Activated CD4-positive, alpha-beta memory T cell treated with anti-CD3 and anti-CD28 coated beads for 36 hours (primary cell): ENCODE measurements at regions of chr4 and their contacts with region 1.

Region 1: DNA sequence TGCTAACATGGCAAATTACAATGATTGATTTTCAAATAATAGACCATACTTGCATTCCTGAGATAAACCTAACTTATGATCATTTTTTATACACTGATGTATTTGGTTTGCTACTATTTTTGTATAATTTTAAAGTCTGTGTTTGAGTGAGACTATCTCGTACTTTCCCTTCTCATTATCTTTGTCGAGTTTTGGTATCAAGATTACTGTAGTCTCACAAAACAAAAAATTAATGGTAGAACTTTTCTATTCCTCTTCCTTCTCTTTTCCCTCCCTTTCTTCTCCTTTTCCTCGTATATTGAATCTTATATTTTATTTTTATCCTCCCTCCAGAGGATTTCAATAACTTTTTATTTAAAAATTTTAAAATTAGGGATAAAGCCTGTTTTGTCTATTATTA is 41.5 kb downstream of the RGS12 start:
- DNase-seq: no peak
- H3K4me3 Mint-ChIP-seq: no peak overlapping the region
- H3K27ac Mint-ChIP-seq: no peak overlapping the region
- H3K4me1 Mint-ChIP-seq: peaks cover 4% of the 10 kb centered on the region
- H3K27me3 Mint-ChIP-seq: no peaks in the 10 kb centered on the region

Region 2: GRCh38 chr4:3346146-3346545 is 11.8 kb after region 1 on chr4:
- CTCF ChIA-PET with region 1: interaction called, 11 read pairs
- POLR2A ChIA-PET with region 1: no interaction called
- intact Hi-C with region 1: no loop called
- DNase-seq: peak; percentile 28
- H3K4me3 Mint-ChIP-seq: no peak overlapping the region
- H3K27ac Mint-ChIP-seq: no peak overlapping the region
- H3K4me1 Mint-ChIP-seq: peaks cover 18% of the 10 kb centered on the region
- H3K27me3 Mint-ChIP-seq: no peaks in the 10 kb centered on the region

Region 3: DNA sequence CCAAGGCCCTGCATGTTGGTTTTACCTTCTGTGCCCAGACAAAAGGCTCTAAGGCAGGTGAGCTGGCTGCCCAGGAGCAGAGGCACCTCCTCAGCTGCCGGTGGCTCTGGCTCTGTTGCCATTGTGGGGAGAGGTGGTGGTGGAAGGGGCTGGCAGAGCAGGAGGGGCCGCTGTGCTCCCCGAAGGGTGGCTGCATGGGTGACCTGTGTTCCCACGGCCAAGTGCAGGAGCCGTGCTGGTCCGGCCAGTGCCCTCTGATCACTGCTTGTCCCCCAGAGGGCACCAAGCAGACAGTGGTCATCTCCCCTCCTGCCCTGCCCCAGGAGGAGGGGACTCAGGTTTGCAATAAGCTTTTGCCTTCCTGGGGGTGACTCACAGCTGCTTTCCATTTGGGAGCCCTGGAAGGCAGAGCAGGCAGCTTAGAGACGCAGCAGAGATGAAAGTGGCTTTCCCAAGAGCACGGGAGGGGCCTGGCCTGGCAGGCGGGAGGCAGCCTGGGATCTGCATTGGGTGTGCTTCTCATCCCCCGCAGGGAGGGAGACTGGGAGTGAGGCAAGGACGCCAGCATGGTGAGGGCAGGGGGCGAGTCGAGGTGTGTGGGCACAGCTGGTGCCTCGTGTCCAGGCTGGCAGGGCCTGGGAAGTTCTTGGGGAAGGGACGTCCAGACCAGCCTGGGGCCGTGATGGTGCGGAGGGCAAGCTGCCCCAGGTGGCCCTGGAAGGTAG is 157.5 kb after region 1 on chr4:
- CTCF ChIA-PET with region 1: no interaction called
- POLR2A ChIA-PET with region 1: no interaction called
- intact Hi-C with region 1: no loop called
- DNase-seq: no peak
- H3K4me3 Mint-ChIP-seq: no peak overlapping the region
- H3K27ac Mint-ChIP-seq: no peak overlapping the region
- H3K4me1 Mint-ChIP-seq: no peaks in the 10 kb centered on the region
- H3K27me3 Mint-ChIP-seq: peaks cover 25% of the 10 kb centered on the region